CD4-positive, alpha-beta T cell (primary cell): ENCODE measurements at regions of chr10 and their contacts with region 1.

Region 1: GRCh38 chr10:62071846-62072281 is 170.4 kb downstream of the ARID5B start:
- DNase-seq: no peak
- ATAC-seq: no peak
- H3K4me3 ChIP-seq: no peak overlapping the region
- H3K4me3 Mint-ChIP-seq: no peak overlapping the region
- H3K27ac ChIP-seq: no peak overlapping the region
- H3K27ac Mint-ChIP-seq: peak overlapping the region; percentile 68
- H3K4me1 ChIP-seq: peaks cover 24% of the 10 kb centered on the region
- H3K4me1 Mint-ChIP-seq: peaks cover 61% of the 10 kb centered on the region
- H3K27me3 ChIP-seq: no peaks in the 10 kb centered on the region
- H3K27me3 Mint-ChIP-seq: no peaks in the 10 kb centered on the region
- CTCF ChIP-seq: no peak

Region 2: DNA sequence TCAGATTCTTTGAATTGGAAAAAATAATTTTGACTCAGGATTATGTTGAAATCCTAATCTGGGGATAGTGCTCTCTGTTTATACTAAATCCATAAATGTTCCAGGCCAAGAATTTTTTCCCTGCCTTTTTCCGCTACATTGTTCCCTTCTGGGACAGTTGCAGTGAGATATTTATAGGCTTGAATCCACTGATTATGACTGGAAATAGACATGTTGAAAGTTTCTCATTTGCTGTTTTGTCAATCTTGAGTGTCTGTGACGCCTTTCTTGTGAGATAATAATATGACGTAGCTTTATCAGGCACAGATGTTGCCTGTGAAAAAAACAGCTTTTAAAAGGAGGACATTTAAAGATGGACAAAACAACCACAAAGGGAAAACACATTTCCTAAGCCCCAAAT is 14.5 kb before region 1 on chr10:
- CTCF ChIA-PET with region 1: interaction called, 3 read pairs
- POLR2A ChIA-PET with region 1: interaction called, 4 read pairs
- intact Hi-C with region 1: loop called in 1 of 2 experiments (anchors 2 kb)
- DNase-seq: no peak
- ATAC-seq: no peak
- H3K4me3 ChIP-seq: no peak overlapping the region
- H3K4me3 Mint-ChIP-seq: no peak overlapping the region
- H3K27ac ChIP-seq: no peak overlapping the region
- H3K27ac Mint-ChIP-seq: no peak overlapping the region
- H3K4me1 ChIP-seq: peaks cover 36% of the 10 kb centered on the region
- H3K4me1 Mint-ChIP-seq: peaks cover 89% of the 10 kb centered on the region
- H3K27me3 ChIP-seq: no peaks in the 10 kb centered on the region
- H3K27me3 Mint-ChIP-seq: no peaks in the 10 kb centered on the region
- CTCF ChIP-seq: no peak

Region 3: DNA sequence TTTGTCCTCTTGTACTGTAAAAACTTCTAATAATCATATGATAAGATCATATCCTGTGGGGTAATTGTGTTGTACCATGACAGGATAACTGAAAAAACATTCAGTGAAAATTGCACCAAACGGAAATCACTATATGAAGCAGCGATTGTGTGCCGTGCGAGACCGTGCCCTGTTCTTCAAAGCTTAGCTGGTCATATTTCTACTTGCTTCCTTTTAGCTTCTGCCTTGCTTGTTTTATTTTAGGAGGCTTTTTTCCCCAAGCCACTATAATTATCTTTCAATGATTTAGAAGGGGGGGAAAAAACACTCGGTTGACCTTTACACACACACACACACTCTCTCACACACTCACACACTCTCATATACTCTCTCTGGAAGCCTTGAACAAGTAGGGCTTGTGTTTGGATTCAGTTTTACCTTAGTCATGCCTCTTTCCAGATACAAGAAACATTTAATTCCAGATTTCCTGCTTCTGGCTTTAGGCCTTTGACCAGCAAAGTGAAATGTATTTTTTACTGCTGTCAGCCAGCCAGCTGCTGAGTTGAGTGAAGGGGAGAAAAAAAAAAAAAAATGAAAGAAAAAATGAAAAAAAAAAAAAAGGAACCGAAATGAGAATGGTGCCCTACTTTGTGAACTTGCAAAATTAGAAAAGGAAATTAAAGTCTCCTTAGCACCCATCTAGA is 11.0 kb after region 1 on chr10:
- CTCF ChIA-PET with region 1: interaction called, 8 read pairs
- POLR2A ChIA-PET with region 1: interaction called, 6 read pairs
- intact Hi-C with region 1: loop called in 1 of 2 experiments (anchors 2 kb)
- DNase-seq: peak in 12 of 14 experiments; percentile 17 to 83 (median 36)
- ATAC-seq: peak; percentile 88
- H3K4me3 ChIP-seq: peak overlapping the region; percentile 32
- H3K4me3 Mint-ChIP-seq: peak overlapping the region; percentile 42
- H3K27ac ChIP-seq: peak overlapping the region; percentile 31 to 80
- H3K27ac Mint-ChIP-seq: peak overlapping the region; percentile 82
- H3K4me1 ChIP-seq: peaks cover 34% of the 10 kb centered on the region
- H3K4me1 Mint-ChIP-seq: peaks cover 65% of the 10 kb centered on the region
- H3K27me3 ChIP-seq: no peaks in the 10 kb centered on the region
- H3K27me3 Mint-ChIP-seq: no peaks in the 10 kb centered on the region
- CTCF ChIP-seq: no peak